GM12878 (cell line): ENCODE measurements at regions of chr4 and their contacts with region 1.

Region 1: GRCh38 chr4:69075061-69075792 is 21.0 kb upstream of the UGT2B7 start:
- DNase-seq: no peak
- ATAC-seq: peak; percentile 57
- H3K4me3 ChIP-seq: no peak overlapping the region
- H3K27ac ChIP-seq: no peak overlapping the region
- H3K4me1 ChIP-seq: no peaks in the 10 kb centered on the region
- H3K27me3 ChIP-seq: no peaks in the 10 kb centered on the region
- CTCF ChIP-seq: no peak
- EP300 ChIP-seq: no peak
- POLR2A ChIP-seq: no peak
- RAD21 ChIP-seq: no peak

Region 2: GRCh38 chr4:68917016-68917415 is 158.2 kb before region 1 on chr4:
- CTCF ChIA-PET with region 1: no interaction called
- POLR2A ChIA-PET with region 1: no interaction called
- RAD21 ChIA-PET with region 1: no interaction called
- SMC1A ChIA-PET with region 1: no interaction called
- in situ Hi-C with region 1: no loop called
- intact Hi-C with region 1: no loop called
- DNase-seq: no peak
- ATAC-seq: no peak
- H3K4me3 ChIP-seq: no peak overlapping the region
- H3K27ac ChIP-seq: no peak overlapping the region
- H3K4me1 ChIP-seq: no peaks in the 10 kb centered on the region
- H3K27me3 ChIP-seq: no peaks in the 10 kb centered on the region
- CTCF ChIP-seq: no peak
- EP300 ChIP-seq: no peak
- POLR2A ChIP-seq: no peak
- RAD21 ChIP-seq: no peak

Region 3: GRCh38 chr4:69092190-69092589 is 17.0 kb after region 1 on chr4:
- CTCF ChIA-PET with region 1: interaction called, 3 read pairs
- POLR2A ChIA-PET with region 1: no interaction called
- RAD21 ChIA-PET with region 1: no interaction called
- SMC1A ChIA-PET with region 1: interaction called, 32 read pairs
- in situ Hi-C with region 1: no loop called
- intact Hi-C with region 1: no loop called
- DNase-seq: no peak
- ATAC-seq: peak; percentile 77
- H3K4me3 ChIP-seq: no peak overlapping the region
- H3K27ac ChIP-seq: no peak overlapping the region
- H3K4me1 ChIP-seq: no peaks in the 10 kb centered on the region
- H3K27me3 ChIP-seq: no peaks in the 10 kb centered on the region
- CTCF ChIP-seq: no peak
- EP300 ChIP-seq: no peak
- POLR2A ChIP-seq: no peak
- RAD21 ChIP-seq: no peak